ENCODE measurements at regions of chrX and their contacts with region 1.

Region 1: DNA sequence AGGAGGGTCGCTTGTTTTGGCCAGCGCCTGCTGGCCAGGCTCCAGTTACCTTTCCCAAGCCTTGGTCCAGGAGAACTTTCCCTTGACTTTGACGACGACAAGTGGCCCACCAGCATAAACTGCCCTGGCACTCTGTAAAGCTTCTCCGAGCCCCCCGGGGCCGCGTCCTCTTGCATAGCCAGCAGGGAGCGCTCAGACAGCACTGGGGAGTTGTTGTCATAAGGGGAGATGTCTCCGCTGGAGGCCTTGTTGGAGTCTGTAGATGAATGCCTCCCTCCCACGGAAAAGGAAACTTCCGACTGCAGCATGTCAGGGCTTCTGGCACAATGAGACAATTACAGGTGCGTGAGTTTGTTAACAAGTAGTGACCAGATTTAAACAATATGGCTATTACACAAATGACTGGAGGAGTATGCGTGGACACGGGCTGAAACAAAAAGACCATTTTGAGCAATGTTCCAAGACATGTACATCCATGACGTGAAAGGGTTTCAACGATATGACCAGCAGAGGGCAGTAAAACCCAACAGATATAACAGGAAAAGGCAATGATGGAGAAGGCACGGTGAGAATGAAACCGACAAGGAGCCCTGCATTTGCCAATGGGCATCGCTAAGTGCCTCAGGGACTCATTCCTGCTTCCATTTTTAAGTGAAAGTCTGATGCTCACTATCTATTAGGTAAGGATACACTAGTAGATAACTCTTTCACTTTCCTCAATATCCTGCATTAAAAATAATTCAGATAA is 33.0 kb downstream of the HCCS start:
- DNase-seq: no peak

Region 2: DNA sequence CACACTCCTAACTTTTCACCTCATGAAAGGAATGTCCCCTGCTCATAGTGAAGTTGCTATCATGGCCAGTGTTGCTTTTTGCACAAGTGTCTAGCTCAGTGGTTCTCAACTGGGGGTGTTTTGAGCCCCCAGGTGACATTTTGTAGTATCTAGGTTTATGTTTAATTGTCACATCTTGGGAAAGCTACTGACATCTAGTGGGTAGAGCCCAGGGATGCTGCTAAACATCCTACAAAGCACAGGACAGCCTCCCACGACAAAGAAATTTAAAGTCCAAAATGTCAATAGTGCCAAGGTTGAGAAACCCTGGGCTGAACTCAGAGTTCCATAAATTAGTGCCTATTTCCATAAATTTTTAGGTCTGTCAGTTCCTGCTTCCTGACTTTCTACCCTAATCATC is 103.7 kb before region 1 on chrX:
- intact Hi-C with region 1: no loop called
- DNase-seq: no peak

Region 3: DNA sequence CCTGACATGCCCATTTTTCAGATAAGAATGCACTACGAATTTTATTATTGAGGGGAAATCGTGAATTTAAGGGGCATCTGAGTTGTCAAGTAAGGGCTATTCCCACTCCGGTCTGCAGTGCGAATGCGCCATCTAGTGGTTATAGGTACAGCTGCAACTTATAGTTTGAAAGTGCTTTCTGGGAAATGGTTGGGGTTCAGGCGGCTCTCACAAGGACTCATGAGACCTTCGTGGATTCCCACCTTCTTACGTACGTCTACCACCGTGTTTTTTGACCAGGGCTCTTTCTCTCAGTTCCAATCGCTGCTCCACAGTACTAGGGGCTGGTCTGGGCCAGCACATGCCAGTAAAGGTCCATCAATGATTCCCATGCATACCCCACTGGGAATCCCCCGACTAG is 626.2 kb after region 1 on chrX:
- intact Hi-C with region 1: loop called in 1 of 2 experiments (anchors 5 kb)
- DNase-seq: no peak

Region 4: DNA sequence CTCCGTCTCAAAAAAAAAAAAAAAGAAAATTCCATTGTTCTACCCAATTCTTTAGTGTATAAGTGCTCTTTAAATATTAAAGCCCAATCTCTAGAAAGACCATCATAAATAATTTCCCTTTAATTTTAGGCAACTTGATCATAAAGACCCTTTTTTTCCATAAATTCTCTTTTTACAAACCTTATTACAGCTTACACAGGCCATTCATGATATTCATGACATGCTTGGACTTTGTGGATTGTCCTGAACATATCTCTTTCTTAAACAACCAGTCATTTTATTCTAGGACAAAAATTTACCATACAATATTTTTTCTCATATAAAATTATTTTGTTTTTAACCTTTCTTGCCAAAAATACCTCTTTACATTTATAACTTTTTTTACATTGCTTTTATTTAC is 1792.8 kb after region 1 on chrX:
- intact Hi-C with region 1: no loop called
- DNase-seq: no peak

Measured in posterior vena cava (tissue), 2 donors.